PC-3 (cell line): ENCODE measurements at regions of chr1 and their contacts with region 1.

Region 1: DNA sequence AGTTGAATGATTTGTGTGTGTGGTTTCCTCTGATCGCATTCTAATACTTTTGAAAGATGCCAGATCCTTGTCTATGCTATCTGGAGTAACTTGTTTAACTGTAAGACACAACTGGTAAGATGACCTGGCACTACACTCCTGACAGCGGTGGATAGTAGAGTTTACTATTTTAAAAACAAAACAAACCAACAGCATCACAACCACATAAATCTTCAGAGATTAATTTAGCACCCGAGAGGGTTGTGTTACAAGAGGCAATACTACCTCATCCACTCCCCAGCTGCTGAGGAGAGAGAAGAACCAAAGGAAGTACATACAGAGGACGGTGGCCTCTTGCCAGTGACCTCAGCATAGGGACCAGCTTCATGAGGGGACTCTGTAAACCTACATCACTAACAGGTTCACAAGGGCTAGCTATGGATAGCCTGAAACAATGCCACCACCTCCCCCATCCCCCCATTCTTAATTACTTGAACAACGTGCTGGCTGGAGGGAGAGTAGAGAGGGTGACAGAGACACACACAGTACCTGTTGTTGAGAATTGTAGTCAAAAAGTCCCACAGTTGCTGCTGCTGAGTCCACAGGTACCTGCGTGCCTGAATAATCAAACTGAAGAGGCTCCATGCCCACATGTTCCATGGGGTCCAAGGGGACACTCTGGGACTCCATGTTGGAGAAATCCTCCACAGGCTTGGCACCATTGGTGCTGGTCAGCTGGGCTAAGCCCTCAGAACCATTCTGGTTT is 73.5 kb downstream of the PUM1 start:
- DNase-seq: no peak
- ATAC-seq: no peak
- H3K4me3 ChIP-seq: no peak overlapping the region
- H3K27ac ChIP-seq: no peak overlapping the region
- H3K4me1 ChIP-seq: 0 out of 2 replicates have a peak, but pooled peaks cover 3% of the 10 kb centered on the region
- H3K27me3 ChIP-seq: no peaks in the 10 kb centered on the region
- CTCF ChIP-seq: no peak

Region 2: GRCh38 chr1:31038360-31038759 is 46.3 kb after region 1 on chr1:
- CTCF ChIA-PET with region 1: no interaction called
- POLR2A ChIA-PET with region 1: no interaction called
- intact Hi-C with region 1: loop called (anchors 10 kb)
- DNase-seq: no peak
- ATAC-seq: no peak; the same call in 1 of the 2 replicates
- H3K4me3 ChIP-seq: no peak overlapping the region
- H3K27ac ChIP-seq: no peak overlapping the region
- H3K4me1 ChIP-seq: peaks cover 6% of the 10 kb centered on the region; the same call in 1 of the 2 replicates
- H3K27me3 ChIP-seq: no peaks in the 10 kb centered on the region
- CTCF ChIP-seq: no peak